ENCODE measurements at regions of chr15 and their contacts with region 1.

Region 1: DNA sequence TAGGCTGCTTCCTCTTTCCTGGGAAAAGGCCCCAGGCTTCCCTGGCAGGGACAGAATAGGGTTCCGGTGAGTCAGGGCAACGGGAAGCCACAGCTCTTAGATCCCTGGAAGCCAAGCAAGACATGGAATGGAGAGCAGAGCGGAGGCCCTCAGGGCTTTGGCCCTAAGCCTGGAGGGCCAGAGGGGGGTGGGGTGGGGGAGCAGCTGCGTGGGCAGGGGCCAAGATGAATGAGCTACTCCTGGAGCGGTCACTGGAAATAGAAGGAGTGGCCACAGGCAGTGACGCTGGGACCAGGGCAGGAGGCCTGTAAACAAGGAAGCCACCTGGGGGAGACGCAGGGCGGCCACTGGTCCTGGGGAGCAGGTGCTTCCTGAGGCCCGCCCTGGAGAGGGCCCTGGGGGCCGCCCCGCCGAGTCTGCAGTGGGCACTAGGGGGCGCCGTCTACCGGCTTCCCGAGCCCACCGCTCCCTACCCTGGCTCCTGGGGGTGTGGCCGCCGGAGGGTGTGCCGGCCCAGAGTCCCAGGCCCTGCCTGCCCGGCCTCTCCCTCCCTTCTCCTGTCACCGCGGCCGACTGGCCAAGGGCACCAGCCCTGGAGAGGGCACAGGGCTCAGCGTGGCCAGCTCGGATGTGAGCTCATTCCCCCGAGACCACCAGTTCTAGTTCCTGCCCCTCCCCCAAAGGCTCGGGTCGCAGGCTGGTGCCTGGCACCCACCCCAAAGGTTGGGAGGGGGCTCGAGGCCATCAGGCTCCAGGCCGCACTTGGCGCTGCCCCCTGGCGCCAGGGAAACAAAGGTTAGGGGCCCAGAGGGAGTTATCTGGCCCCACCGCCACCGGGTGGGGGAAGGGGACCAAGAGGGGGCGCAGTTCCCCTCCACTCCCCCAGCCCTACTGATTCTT is 12.1 kb downstream of the VPS18 start:
- DNase-seq: peak; percentile 50 to 84 (median 76)
- ATAC-seq: peak; percentile 63
- H3K4me3 ChIP-seq: peak overlapping the region; percentile 68 to 80
- H3K4me3 Mint-ChIP-seq: peak overlapping the region; percentile 83
- H3K27ac ChIP-seq: peak overlapping the region; percentile 19 to 82
- H3K27ac Mint-ChIP-seq: peak overlapping the region; percentile 87
- H3K4me1 ChIP-seq: peaks cover 18% of the 10 kb centered on the region
- H3K4me1 Mint-ChIP-seq: peaks cover 38% of the 10 kb centered on the region
- H3K27me3 ChIP-seq: no peaks in the 10 kb centered on the region
- H3K27me3 Mint-ChIP-seq: no peaks in the 10 kb centered on the region
- CTCF ChIP-seq: peak; percentile 85

Region 2: GRCh38 chr15:40743921-40744814 is 162.2 kb before region 1 on chr15:
- CTCF ChIA-PET with region 1: no interaction called
- POLR2A ChIA-PET with region 1: no interaction called
- intact Hi-C with region 1: no loop called
- DNase-seq: peak; percentile 23 to 92 (median 69)
- ATAC-seq: peak; percentile 92
- H3K4me3 ChIP-seq: peak overlapping the region in 1 of 2 experiments; percentile 5
- H3K4me3 Mint-ChIP-seq: no peak overlapping the region
- H3K27ac ChIP-seq: peak overlapping the region; percentile 29 to 95
- H3K27ac Mint-ChIP-seq: peak overlapping the region; percentile 96
- H3K4me1 ChIP-seq: peaks cover 5% of the 10 kb centered on the region
- H3K4me1 Mint-ChIP-seq: peaks cover 16% of the 10 kb centered on the region
- H3K27me3 ChIP-seq: no peaks in the 10 kb centered on the region
- H3K27me3 Mint-ChIP-seq: no peaks in the 10 kb centered on the region
- CTCF ChIP-seq: no peak

Region 3: DNA sequence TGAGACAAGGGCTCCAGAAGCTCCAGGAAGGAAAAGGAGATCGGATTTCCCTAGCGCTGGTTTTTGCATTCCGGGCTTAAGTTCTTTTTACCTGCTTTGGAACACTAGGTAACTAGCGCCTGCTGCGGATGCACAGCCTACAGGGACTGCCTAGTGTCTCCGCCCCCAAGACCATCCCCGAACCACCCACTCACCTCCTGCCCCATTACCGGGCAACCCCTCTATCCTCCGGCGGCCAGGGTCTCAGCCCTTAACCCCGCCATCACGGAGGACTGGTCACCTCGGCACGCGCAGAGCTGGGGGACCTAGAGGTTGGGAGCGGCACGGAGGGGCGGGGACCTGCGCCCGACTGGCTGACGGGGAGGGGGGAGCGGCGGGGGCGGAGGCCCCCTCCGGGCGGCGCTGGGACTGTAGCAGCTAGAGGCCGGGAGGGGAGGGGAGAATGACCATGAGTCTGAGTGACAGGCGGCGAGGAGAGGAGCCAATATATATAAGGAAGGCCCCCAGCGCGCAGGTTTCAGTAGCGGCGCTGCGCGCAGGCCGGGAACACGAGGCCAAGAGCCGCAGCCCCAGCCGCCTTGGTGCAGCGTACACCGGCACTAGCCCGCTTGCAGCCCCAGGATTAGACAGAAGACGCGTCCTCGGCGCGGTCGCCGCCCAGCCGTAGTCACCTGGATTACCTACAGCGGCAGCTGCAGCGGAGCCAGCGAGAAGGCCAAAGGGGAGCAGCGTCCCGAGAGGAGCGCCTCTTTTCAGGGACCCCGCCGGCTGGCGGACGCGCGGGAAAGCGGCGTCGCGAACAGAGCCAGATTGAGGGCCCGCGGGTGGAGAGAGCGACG is 22.7 kb after region 1 on chr15 and contains the start of gene DLL4:
- CTCF ChIA-PET with region 1: interaction called, 28 read pairs
- POLR2A ChIA-PET with region 1: interaction called, 6 read pairs
- intact Hi-C with region 1: loop called (anchors 2 kb)
- DNase-seq: peak in 4 of 9 experiments; percentile 37 to 59 (median 50)
- ATAC-seq: peak; percentile 50
- H3K4me3 ChIP-seq: peak within 1 kb of the TSS; percentile 38 to 63
- H3K4me3 Mint-ChIP-seq: peak within 1 kb of the TSS; percentile 83
- H3K27ac ChIP-seq: no peak within 1 kb of the TSS
- H3K27ac Mint-ChIP-seq: no peak within 1 kb of the TSS
- H3K4me1 ChIP-seq: peaks cover 60% of the 10 kb centered on the region
- H3K4me1 Mint-ChIP-seq: peaks cover 51% of the 10 kb centered on the region
- H3K27me3 ChIP-seq: peaks cover 44 to 62% of the 10 kb centered on the region in 2 experiments
- H3K27me3 Mint-ChIP-seq: peaks cover 63% of the 10 kb centered on the region
- CTCF ChIP-seq: no peak
- total RNA-seq, gene DLL4: 0.08 TPM

Region 4: GRCh38 chr15:40952901-40953712 is 46.8 kb after region 1 on chr15 and contains the start of gene CHAC1:
- CTCF ChIA-PET with region 1: interaction called, 6 read pairs
- POLR2A ChIA-PET with region 1: interaction called, 8 read pairs
- intact Hi-C with region 1: loop called in 1 of 2 experiments (anchors 1 kb)
- DNase-seq: peak; percentile 84 to 97 (median 94)
- ATAC-seq: peak; percentile 96
- H3K4me3 ChIP-seq: peak within 1 kb of the TSS; percentile 68 to 73
- H3K4me3 Mint-ChIP-seq: peak within 1 kb of the TSS; percentile 93
- H3K27ac ChIP-seq: peak within 1 kb of the TSS in 1 of 2 experiments; percentile 43
- H3K27ac Mint-ChIP-seq: peak within 1 kb of the TSS; percentile 73
- H3K4me1 ChIP-seq: peaks cover 12% of the 10 kb centered on the region
- H3K4me1 Mint-ChIP-seq: peaks cover 16% of the 10 kb centered on the region
- H3K27me3 ChIP-seq: no peaks in the 10 kb centered on the region
- H3K27me3 Mint-ChIP-seq: no peaks in the 10 kb centered on the region
- CTCF ChIP-seq: peak; percentile 20
- total RNA-seq, gene CHAC1: 0.22 to 0.69 TPM

Region 5: GRCh38 chr15:41031232-41032078 is 125.1 kb after region 1 on chr15:
- CTCF ChIA-PET with region 1: interaction called, 120 read pairs
- POLR2A ChIA-PET with region 1: no interaction called
- intact Hi-C with region 1: no loop called
- DNase-seq: no peak
- ATAC-seq: no peak
- H3K4me3 ChIP-seq: no peak overlapping the region
- H3K4me3 Mint-ChIP-seq: no peak overlapping the region
- H3K27ac ChIP-seq: no peak overlapping the region
- H3K27ac Mint-ChIP-seq: peak overlapping the region; percentile 14
- H3K4me1 ChIP-seq: no peaks in the 10 kb centered on the region
- H3K4me1 Mint-ChIP-seq: peaks cover 10% of the 10 kb centered on the region
- H3K27me3 ChIP-seq: no peaks in the 10 kb centered on the region
- H3K27me3 Mint-ChIP-seq: no peaks in the 10 kb centered on the region
- CTCF ChIP-seq: no peak

Region 6: DNA sequence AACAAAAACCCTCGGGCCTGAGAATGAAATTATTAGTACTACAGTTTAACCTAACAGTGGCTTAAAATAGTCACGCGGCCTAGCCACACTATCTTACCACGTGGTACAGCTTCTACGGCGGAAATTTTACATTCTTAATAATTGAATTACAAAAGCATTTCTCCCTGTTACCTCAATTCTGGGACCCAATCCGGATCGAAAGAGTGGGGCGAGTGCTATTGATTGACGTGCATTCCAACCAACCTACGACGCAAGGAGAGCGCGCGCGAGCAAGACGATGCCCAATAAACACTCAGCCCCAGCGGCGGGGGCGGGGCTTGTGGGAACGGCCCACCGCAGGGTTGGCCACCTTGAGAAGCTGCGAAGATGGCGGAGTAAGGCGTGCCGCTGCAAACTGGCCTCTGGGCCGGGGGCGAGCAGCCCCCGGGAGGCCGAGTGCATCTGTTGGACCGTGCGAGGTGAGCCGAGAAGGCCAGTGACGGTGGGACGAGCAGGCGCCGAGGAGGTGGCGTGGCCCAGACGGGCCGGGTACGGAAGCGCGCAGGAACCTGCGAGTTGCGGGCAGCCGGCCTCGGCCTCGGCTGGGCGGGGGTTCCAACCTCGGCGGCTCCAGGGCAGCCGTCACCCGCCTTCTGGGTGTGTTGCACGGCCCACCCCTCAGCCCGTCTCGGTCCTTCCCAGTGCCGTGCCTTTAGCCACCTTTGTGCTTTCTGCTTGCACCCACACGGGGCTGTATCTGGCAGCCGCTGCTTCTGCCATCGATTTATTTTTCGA is 377.5 kb after region 1 on chr15:
- CTCF ChIA-PET with region 1: no interaction called
- POLR2A ChIA-PET with region 1: interaction called, 3 read pairs
- intact Hi-C with region 1: loop called (anchors 1 to 5 kb)
- DNase-seq: peak; percentile 94 to 100 (median 97)
- ATAC-seq: peak; percentile 96
- H3K4me3 ChIP-seq: peak overlapping the region; percentile 70 to 86
- H3K4me3 Mint-ChIP-seq: peak overlapping the region; percentile 89
- H3K27ac ChIP-seq: peak overlapping the region; percentile 91 to 93
- H3K27ac Mint-ChIP-seq: peak overlapping the region; percentile 95
- H3K4me1 ChIP-seq: peaks cover 25% of the 10 kb centered on the region
- H3K4me1 Mint-ChIP-seq: peaks cover 48% of the 10 kb centered on the region
- H3K27me3 ChIP-seq: no peaks in the 10 kb centered on the region
- H3K27me3 Mint-ChIP-seq: no peaks in the 10 kb centered on the region
- CTCF ChIP-seq: no peak